B cell (primary cell): ENCODE measurements at regions of chr2 and their contacts with region 1.

Region 1: GRCh38 chr2:134411828-134412638 is 158.2 kb downstream of the MGAT5 start:
- DNase-seq: peak; percentile 89
- ATAC-seq: peak; percentile 93
- H3K4me3 ChIP-seq: peak overlapping the region in 2 of 5 experiments; percentile 6 to 18
- H3K4me3 Mint-ChIP-seq: peak overlapping the region; percentile 59
- H3K27ac ChIP-seq: peak overlapping the region; percentile 64 to 74
- H3K27ac Mint-ChIP-seq: peak overlapping the region; percentile 86
- H3K4me1 ChIP-seq: peaks cover 45 to 50% of the 10 kb centered on the region in 2 donors
- H3K4me1 Mint-ChIP-seq: peaks cover 49% of the 10 kb centered on the region
- H3K27me3 ChIP-seq: no peaks in the 10 kb centered on the region
- H3K27me3 Mint-ChIP-seq: no peaks in the 10 kb centered on the region
- CTCF ChIP-seq: peak; percentile 81

Region 2: GRCh38 chr2:133886735-133887660 is 525.0 kb before region 1 on chr2:
- CTCF ChIA-PET with region 1: interaction called, 232 read pairs
- POLR2A ChIA-PET with region 1: interaction called, 4 read pairs
- intact Hi-C with region 1: loop called (anchors 1 kb)
- DNase-seq: peak; percentile 79
- ATAC-seq: peak; percentile 75
- H3K4me3 ChIP-seq: no peak overlapping the region
- H3K4me3 Mint-ChIP-seq: no peak overlapping the region
- H3K27ac ChIP-seq: no peak overlapping the region
- H3K27ac Mint-ChIP-seq: no peak overlapping the region
- H3K4me1 ChIP-seq: peaks cover 7 to 10% of the 10 kb centered on the region in 2 donors
- H3K4me1 Mint-ChIP-seq: peaks cover 13% of the 10 kb centered on the region
- H3K27me3 ChIP-seq: peaks cover 0 to 3% (median 0%) of the 10 kb centered on the region in 4 experiments
- H3K27me3 Mint-ChIP-seq: no peaks in the 10 kb centered on the region
- CTCF ChIP-seq: peak; percentile 85

Region 3: GRCh38 chr2:134198006-134198634 is 213.9 kb before region 1 on chr2:
- CTCF ChIA-PET with region 1: interaction called, 14 read pairs
- POLR2A ChIA-PET with region 1: no interaction called
- intact Hi-C with region 1: no loop called
- DNase-seq: no peak
- ATAC-seq: no peak
- H3K4me3 ChIP-seq: no peak overlapping the region
- H3K4me3 Mint-ChIP-seq: peak overlapping the region; percentile 66
- H3K27ac ChIP-seq: peak overlapping the region; percentile 23 to 59
- H3K27ac Mint-ChIP-seq: peak overlapping the region; percentile 62
- H3K4me1 ChIP-seq: peaks cover 56 to 57% of the 10 kb centered on the region in 2 donors
- H3K4me1 Mint-ChIP-seq: peaks cover 82% of the 10 kb centered on the region
- H3K27me3 ChIP-seq: no peaks in the 10 kb centered on the region
- H3K27me3 Mint-ChIP-seq: no peaks in the 10 kb centered on the region
- CTCF ChIP-seq: no peak

Region 4: DNA sequence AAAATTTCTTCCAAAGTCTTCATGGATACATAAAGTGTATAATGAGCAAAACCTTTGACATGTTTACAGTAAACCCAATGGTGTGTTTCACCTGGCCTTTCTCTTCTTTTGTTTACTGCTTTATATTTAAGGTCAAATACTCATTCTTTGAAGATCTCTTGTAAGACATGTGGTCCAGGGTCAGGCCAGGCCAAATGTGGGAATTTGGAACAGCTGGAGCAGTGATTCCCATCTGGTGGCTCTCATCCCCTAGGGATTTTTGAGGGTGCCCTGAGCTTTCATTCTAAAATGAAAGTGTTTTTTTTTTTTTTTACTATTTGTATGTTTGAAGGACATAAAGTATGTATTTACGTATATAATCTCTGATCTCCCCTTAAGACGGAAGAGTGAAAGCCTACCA is 172.0 kb before region 1 on chr2:
- CTCF ChIA-PET with region 1: interaction called, 124 read pairs
- POLR2A ChIA-PET with region 1: interaction called, 3 read pairs
- intact Hi-C with region 1: loop called (anchors 1 kb)
- DNase-seq: no peak
- ATAC-seq: no peak
- H3K4me3 ChIP-seq: no peak overlapping the region
- H3K4me3 Mint-ChIP-seq: no peak overlapping the region
- H3K27ac ChIP-seq: peak overlapping the region in 1 of 2 donors; percentile 0
- H3K27ac Mint-ChIP-seq: no peak overlapping the region
- H3K4me1 ChIP-seq: peaks cover 72 to 76% of the 10 kb centered on the region in 2 donors
- H3K4me1 Mint-ChIP-seq: peaks cover 82% of the 10 kb centered on the region
- H3K27me3 ChIP-seq: no peaks in the 10 kb centered on the region
- H3K27me3 Mint-ChIP-seq: no peaks in the 10 kb centered on the region
- CTCF ChIP-seq: no peak

Region 5: DNA sequence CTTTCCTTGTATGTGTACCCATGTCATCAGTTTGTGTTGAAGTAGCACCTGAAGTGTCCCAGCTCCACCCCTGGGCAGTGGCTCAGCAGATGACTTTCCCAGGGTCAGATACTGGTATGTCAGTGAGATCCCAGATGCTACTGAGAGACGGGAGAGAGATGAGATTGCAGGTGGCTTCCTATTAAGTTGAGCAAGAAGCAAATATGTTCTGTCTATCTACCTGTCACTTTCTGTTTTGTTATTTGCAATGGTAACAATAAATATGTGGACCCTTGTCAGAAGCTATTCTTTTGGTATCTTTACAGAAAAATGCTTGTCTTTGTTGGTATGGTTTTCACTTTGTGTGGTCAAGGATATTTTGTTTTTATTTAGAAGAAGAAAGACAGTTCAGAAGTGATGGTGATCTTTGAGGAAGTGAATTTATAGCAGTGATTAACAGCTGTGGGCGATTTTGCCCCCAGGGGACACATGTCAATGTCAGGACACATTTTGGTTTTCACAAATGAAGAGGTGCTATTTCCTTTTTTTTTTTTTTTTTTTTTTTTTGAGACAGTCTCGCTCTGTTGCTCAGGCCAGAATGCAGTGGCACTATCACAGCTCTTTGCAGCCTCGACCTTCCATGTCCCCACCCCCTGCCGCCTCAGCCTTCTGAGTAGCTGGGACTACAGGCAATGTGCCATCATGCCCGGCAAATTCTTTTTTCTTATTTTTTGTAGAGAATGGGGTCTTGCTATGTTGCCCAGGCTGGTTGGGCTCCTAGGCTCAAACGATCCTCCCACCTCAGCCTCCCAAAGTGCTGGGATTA is 136.8 kb before region 1 on chr2:
- CTCF ChIA-PET with region 1: interaction called, 7 read pairs
- POLR2A ChIA-PET with region 1: no interaction called
- intact Hi-C with region 1: loop called (anchors 1 kb)
- DNase-seq: peak; percentile 93
- ATAC-seq: peak; percentile 91
- H3K4me3 ChIP-seq: peak overlapping the region in 4 of 5 experiments; percentile 6 to 57 (median 26)
- H3K4me3 Mint-ChIP-seq: peak overlapping the region; percentile 90
- H3K27ac ChIP-seq: peak overlapping the region; percentile 77 to 80
- H3K27ac Mint-ChIP-seq: peak overlapping the region; percentile 96
- H3K4me1 ChIP-seq: peaks cover 97% of the 10 kb centered on the region in 2 donors
- H3K4me1 Mint-ChIP-seq: peaks cover 97% of the 10 kb centered on the region
- H3K27me3 ChIP-seq: no peaks in the 10 kb centered on the region
- H3K27me3 Mint-ChIP-seq: no peaks in the 10 kb centered on the region
- CTCF ChIP-seq: no peak

Region 6: GRCh38 chr2:134466141-134466540 is 54.1 kb after region 1 on chr2:
- CTCF ChIA-PET with region 1: no interaction called
- POLR2A ChIA-PET with region 1: no interaction called
- intact Hi-C with region 1: no loop called
- DNase-seq: peak; percentile 43
- ATAC-seq: no peak
- H3K4me3 ChIP-seq: no peak overlapping the region
- H3K4me3 Mint-ChIP-seq: no peak overlapping the region
- H3K27ac ChIP-seq: no peak overlapping the region
- H3K27ac Mint-ChIP-seq: no peak overlapping the region
- H3K4me1 ChIP-seq: no peaks in the 10 kb centered on the region
- H3K4me1 Mint-ChIP-seq: no peaks in the 10 kb centered on the region
- H3K27me3 ChIP-seq: no peaks in the 10 kb centered on the region
- H3K27me3 Mint-ChIP-seq: no peaks in the 10 kb centered on the region
- CTCF ChIP-seq: peak; percentile 24

Region 7: GRCh38 chr2:134558208-134558855 is 146.3 kb after region 1 on chr2:
- CTCF ChIA-PET with region 1: no interaction called
- POLR2A ChIA-PET with region 1: no interaction called
- intact Hi-C with region 1: no loop called
- DNase-seq: no peak
- ATAC-seq: no peak
- H3K4me3 ChIP-seq: no peak overlapping the region
- H3K4me3 Mint-ChIP-seq: no peak overlapping the region
- H3K27ac ChIP-seq: no peak overlapping the region
- H3K27ac Mint-ChIP-seq: no peak overlapping the region
- H3K4me1 ChIP-seq: no peaks in the 10 kb centered on the region
- H3K4me1 Mint-ChIP-seq: no peaks in the 10 kb centered on the region
- H3K27me3 ChIP-seq: no peaks in the 10 kb centered on the region
- H3K27me3 Mint-ChIP-seq: no peaks in the 10 kb centered on the region
- CTCF ChIP-seq: no peak

Region 8: GRCh38 chr2:134897932-134898331 is 485.9 kb after region 1 on chr2:
- CTCF ChIA-PET with region 1: interaction called, 11 read pairs
- POLR2A ChIA-PET with region 1: no interaction called
- intact Hi-C with region 1: no loop called
- DNase-seq: peak; percentile 24
- ATAC-seq: no peak
- H3K4me3 ChIP-seq: no peak overlapping the region
- H3K4me3 Mint-ChIP-seq: no peak overlapping the region
- H3K27ac ChIP-seq: no peak overlapping the region
- H3K27ac Mint-ChIP-seq: no peak overlapping the region
- H3K4me1 ChIP-seq: no peaks in the 10 kb centered on the region
- H3K4me1 Mint-ChIP-seq: no peaks in the 10 kb centered on the region
- H3K27me3 ChIP-seq: no peaks in the 10 kb centered on the region
- H3K27me3 Mint-ChIP-seq: no peaks in the 10 kb centered on the region
- CTCF ChIP-seq: peak; percentile 84

Region 9: DNA sequence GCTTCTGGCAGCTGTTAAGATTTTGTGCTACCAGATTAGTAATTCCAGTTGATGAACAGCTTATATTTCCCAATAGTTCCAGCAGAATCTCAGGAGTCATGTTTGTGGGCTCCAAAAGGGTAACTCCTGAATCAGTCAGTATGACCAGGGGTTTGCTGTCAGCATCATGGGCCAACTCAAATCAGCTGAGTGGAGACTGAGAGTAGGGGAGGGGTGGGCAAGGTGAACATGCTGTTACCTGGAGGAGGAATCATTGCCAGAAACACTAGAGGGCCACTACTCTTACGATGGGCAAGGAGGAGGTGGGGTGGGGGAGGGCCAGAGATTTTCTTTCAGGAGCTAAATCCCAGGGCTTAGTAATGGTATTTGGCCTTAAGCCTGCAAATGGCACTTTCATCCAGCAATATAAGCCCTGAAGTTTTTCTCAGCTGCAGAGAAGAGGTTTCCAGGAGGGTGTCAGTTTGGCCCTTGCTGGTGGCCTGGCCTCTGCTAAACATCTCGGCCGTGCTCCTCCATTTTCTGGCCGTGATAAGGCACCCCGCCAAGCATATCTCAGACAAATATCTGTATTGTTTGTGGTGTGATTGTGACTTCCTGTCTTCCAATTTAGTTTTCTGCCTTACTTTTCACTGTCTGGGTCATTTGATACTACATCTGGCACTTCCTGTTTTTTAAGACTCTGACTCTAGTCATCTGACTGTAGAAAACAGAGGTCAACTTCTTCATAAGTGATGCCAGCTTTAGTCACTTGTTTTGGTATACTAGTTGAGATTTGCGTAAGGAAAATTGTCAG is 1826.4 kb after region 1 on chr2:
- CTCF ChIA-PET with region 1: no interaction called
- POLR2A ChIA-PET with region 1: no interaction called
- intact Hi-C with region 1: no loop called
- DNase-seq: peak; percentile 93
- ATAC-seq: peak; percentile 70
- H3K4me3 ChIP-seq: peak overlapping the region in 1 of 5 experiments; percentile 17
- H3K4me3 Mint-ChIP-seq: peak overlapping the region; percentile 23
- H3K27ac ChIP-seq: peak overlapping the region; percentile 98
- H3K27ac Mint-ChIP-seq: peak overlapping the region; percentile 87
- H3K4me1 ChIP-seq: peaks cover 66 to 74% of the 10 kb centered on the region in 2 donors
- H3K4me1 Mint-ChIP-seq: peaks cover 85% of the 10 kb centered on the region
- H3K27me3 ChIP-seq: no peaks in the 10 kb centered on the region
- H3K27me3 Mint-ChIP-seq: no peaks in the 10 kb centered on the region
- CTCF ChIP-seq: no peak